ENCODE measurements at regions of chr18 and their contacts with region 1.

Region 1: GRCh38 chr18:55110436-55110835 is 151.2 kb upstream of the CCDC68 start:
- DNase-seq: peak in 4 of 5 donors; percentile 35 to 69 (median 48)
- ATAC-seq: peak; percentile 83 to 96 (median 90)
- H3K4me3 ChIP-seq: no peak overlapping the region
- H3K27ac ChIP-seq: peak overlapping the region in 11 of 12 donors; percentile 39 to 88 (median 77)
- H3K4me1 ChIP-seq: peaks cover 0 to 28% (median 8%) of the 10 kb centered on the region in 12 donors
- H3K27me3 ChIP-seq: no peaks in the 10 kb centered on the region
- CTCF ChIP-seq: no peak
- POLR2A ChIP-seq: no peak

Region 2: GRCh38 chr18:54939361-54939917 is 171.0 kb before region 1 on chr18:
- intact Hi-C with region 1: no loop called
- DNase-seq: no peak
- ATAC-seq: no peak
- H3K4me3 ChIP-seq: no peak overlapping the region
- H3K27ac ChIP-seq: no peak overlapping the region
- H3K4me1 ChIP-seq: no peaks in the 10 kb centered on the region
- H3K27me3 ChIP-seq: no peaks in the 10 kb centered on the region
- CTCF ChIP-seq: no peak
- POLR2A ChIP-seq: no peak

Region 3: DNA sequence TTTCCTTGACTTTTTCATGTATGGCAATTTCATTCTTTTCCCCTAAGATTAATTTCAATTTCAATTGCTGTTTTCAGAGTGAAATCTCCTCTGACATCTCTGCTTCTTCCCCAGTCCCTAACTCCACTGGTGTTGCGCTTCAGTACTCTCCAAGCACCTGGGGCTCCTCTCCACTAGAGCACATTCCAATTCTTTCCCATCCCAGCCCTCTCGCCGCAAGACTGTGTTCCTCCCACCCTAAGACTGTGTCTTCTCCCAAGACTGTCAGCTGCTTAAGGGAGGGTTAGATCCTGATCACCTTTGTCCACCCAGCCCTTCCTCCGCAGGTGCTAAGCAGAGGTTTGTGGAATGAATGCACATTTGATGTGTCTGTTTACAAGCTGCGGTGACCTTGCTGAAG is 104.5 kb after region 1 on chr18:
- intact Hi-C with region 1: loop called in 4 of 10 experiments (anchors 5 to 10 kb)
- DNase-seq: no peak
- ATAC-seq: no peak
- H3K4me3 ChIP-seq: no peak overlapping the region
- H3K27ac ChIP-seq: no peak overlapping the region
- H3K4me1 ChIP-seq: peaks cover 0 to 8% (median under 1%) of the 10 kb centered on the region in 12 donors
- H3K27me3 ChIP-seq: no peaks in the 10 kb centered on the region
- CTCF ChIP-seq: no peak
- POLR2A ChIP-seq: no peak

Region 4: DNA sequence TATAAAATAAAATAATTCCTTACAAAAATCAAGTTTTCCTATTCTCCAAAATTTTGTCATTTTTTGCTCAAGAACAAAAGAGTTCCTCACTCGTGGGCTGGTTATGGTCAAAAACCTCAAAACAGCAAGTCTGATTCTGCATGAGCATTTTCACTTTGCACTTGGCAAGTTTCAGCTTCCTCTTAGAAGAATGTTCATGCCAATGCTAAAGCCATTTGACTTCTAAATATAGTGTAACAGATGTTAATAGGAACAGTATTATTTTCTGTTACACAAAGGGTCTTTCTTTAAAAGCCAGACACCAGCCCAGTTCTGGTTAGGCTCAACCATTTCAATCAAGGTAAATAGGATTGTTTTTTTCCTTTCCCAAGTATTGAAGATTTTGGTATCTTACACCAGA is 110.1 kb after region 1 on chr18:
- intact Hi-C with region 1: loop called in 4 of 10 experiments (anchors 5 to 10 kb)
- DNase-seq: no peak
- ATAC-seq: peak in 2 of 4 donors; percentile 21 to 80
- H3K4me3 ChIP-seq: no peak overlapping the region
- H3K27ac ChIP-seq: peak overlapping the region in 9 of 12 donors; percentile 1 to 64 (median 29)
- H3K4me1 ChIP-seq: peaks cover 0 to 25% (median 10%) of the 10 kb centered on the region in 12 donors
- H3K27me3 ChIP-seq: no peaks in the 10 kb centered on the region
- CTCF ChIP-seq: no peak
- POLR2A ChIP-seq: no peak

Region 5: DNA sequence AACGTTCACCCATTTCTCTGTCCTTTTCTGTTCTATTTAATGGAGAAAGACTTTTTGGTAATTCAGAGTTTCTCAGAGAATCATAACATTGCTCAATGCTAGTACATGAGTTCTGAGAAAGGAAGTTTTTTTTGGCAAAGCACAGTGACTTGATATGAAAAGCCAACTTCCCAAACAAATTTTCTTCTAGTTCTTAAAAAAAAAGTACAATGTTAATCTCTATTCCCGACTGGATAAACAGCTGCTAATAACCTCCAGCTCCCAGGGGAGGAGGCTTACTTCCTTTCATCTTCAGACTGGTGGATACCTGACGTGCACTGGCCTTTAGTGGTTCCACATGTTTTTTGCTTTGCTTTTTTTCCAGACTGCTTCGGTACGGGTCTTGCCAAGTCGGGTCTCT is 133.4 kb after region 1 on chr18:
- intact Hi-C with region 1: loop called in 1 of 10 experiments (anchors 5 kb)
- DNase-seq: peak in 4 of 5 donors; percentile 72 to 83 (median 78)
- ATAC-seq: peak; percentile 76 to 89 (median 86)
- H3K4me3 ChIP-seq: no peak overlapping the region
- H3K27ac ChIP-seq: peak overlapping the region; percentile 49 to 84 (median 77)
- H3K4me1 ChIP-seq: peaks cover 12 to 98% (median 74%) of the 10 kb centered on the region in 12 donors
- H3K27me3 ChIP-seq: no peaks in the 10 kb centered on the region
- CTCF ChIP-seq: no peak
- POLR2A ChIP-seq: no peak

Region 6: DNA sequence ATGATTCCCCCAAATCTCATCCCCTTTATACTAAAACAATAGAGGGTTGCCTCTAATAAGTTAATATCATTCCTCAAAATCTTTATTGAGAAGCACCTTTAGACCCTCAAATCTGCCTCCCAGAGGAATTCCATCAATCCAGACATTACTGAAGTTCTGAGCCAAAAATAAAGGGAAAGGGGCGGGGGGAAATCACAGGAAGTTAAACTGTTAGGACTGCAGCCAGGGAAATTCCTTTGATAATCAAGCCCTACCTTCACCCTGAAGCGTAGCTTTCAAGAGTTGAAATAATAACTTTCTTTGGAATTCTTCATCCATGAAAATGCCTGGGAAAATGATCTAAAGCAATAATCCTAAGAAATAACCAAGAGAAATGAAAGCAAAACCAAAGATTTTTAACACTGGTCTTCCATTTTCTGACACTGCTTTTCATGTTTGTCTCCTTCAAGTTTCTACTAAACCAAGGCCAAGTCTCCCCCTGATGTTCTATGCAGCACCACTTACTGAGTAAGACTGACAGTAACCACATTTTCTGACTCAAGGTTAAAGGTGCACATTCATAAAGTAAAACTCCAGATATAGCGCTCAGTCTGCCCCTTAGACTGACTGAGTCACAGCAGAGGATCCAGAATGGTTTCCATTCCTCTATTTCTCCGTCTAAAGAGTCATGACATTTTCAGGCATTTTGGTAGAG is 399.3 kb after region 1 on chr18:
- intact Hi-C with region 1: loop called in 1 of 10 experiments (anchors 10 kb)
- DNase-seq: peak in 2 of 5 donors; percentile 40 to 63
- ATAC-seq: peak in 2 of 4 donors; percentile 45 to 64
- H3K4me3 ChIP-seq: peak overlapping the region in 11 of 12 donors; percentile 1 to 50 (median 34)
- H3K27ac ChIP-seq: peak overlapping the region; percentile 52 to 94 (median 86)
- H3K4me1 ChIP-seq: peaks cover 0 to 55% (median 18%) of the 10 kb centered on the region in 12 donors
- H3K27me3 ChIP-seq: no peaks in the 10 kb centered on the region
- CTCF ChIP-seq: no peak
- POLR2A ChIP-seq: no peak

Measured in heart left ventricle (tissue), 16 donors.